Left ventricle myocardium superior (tissue), 1 donor: ENCODE measurements at regions of chr3 and their contacts with region 1.

Region 1: GRCh38 chr3:59857589-59858346 is 807.9 kb upstream of the CFAP20DC start:
- DNase-seq: peak; percentile 88
- ATAC-seq: peak; percentile 98

Region 2: DNA sequence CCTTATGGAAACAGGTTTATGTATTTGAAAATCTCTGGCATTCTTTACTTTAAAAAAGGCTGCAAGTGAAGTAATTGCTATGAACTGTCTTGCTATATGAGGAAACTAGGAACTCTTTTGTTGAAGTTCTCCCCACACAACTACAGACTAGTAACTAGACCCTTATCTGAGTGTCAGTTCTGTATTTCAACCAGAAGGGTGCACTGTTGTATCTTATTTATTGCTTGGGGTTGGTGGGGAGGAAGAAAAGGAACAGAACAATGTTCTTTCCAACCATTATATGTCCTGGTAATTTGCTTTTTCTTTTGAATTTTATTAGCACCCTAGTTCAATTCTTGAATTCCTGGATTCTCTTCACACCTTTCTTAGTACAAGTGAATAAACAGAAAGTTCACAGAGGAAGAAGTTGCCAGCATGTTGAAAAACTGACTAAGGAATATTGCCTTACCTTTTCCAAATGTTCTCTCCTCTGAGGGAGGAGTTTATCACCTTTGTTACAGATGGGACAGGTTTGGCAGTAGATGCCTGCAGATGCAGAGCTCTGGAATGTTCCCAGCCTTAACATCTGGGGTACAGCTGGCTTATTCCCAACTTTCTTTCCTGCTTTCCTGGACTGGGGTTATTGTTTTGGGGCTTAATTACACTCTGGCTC is 645.5 kb before region 1 on chr3:
- intact Hi-C with region 1: loop called (anchors 5 kb)
- DNase-seq: no peak
- ATAC-seq: peak; percentile 78

Region 3: GRCh38 chr3:59575113-59576001 is 282.4 kb before region 1 on chr3:
- intact Hi-C with region 1: loop called (anchors 2 kb)
- DNase-seq: peak; percentile 91
- ATAC-seq: peak; percentile 86